HEK293 (cell line): ENCODE measurements at regions of chr5 and their contacts with region 1.

Region 1: DNA sequence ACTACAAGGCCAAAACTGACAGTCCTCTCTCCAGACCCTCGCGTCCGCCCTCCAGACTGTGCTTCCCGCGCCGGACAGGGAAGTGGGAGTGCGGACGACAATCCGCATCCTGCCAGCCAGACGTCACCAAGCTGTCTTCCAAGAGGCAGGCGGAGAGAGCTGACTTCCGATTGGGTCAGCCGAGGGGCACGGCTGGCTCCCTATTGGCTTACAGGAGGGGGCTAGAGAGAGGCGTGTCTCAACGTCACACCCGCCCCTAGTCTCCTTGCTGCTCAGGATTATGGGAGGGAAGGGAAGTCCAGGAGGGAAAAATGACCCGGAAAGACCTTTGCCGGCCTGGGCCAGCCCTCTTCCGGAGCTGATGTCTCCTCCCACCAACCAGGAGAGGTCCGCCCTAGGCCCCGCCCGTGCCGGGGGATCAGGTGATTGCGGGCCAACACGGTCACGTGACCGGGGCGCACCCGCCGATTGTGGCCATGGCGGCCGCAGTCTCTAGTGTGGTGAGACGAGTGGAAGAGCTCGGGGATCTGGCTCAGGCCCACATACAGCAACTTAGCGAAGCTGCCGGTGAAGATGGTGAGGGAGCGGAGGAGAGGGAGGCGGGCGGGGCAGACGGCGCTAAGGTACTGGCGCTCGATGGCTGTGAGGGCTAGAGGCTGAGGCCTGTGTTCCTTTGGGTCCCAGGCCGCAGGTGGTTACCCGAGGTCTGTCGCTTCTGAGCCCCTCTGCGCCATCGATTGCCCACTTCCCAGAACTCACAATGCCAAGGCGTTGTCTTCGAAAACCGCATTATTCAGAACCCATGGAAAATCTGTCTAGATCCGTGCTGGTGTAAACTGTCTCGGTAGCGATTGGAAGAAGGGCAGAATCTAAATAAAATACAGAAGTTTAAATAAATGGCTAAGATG is at the start of gene RIMOC1:
- H3K4me3 ChIP-seq: peak within 1 kb of the TSS; percentile 97
- H3K27ac ChIP-seq: peak within 1 kb of the TSS; percentile 58; the same call in 1 of the 2 replicates
- H3K4me1 ChIP-seq: peaks cover 4% of the 10 kb centered on the region
- CTCF ChIP-seq: no peak

Region 2: GRCh38 chr5:41863871-41864486 is 40.2 kb before region 1 on chr5:
- CTCF ChIA-PET with region 1: no interaction called
- POLR2A ChIA-PET with region 1: interaction called, 30 read pairs
- H3K4me3 ChIP-seq: no peak overlapping the region
- H3K27ac ChIP-seq: no peak overlapping the region
- H3K4me1 ChIP-seq: peaks cover 9% of the 10 kb centered on the region; the same call in 1 of the 2 replicates
- CTCF ChIP-seq: no peak

Region 3: DNA sequence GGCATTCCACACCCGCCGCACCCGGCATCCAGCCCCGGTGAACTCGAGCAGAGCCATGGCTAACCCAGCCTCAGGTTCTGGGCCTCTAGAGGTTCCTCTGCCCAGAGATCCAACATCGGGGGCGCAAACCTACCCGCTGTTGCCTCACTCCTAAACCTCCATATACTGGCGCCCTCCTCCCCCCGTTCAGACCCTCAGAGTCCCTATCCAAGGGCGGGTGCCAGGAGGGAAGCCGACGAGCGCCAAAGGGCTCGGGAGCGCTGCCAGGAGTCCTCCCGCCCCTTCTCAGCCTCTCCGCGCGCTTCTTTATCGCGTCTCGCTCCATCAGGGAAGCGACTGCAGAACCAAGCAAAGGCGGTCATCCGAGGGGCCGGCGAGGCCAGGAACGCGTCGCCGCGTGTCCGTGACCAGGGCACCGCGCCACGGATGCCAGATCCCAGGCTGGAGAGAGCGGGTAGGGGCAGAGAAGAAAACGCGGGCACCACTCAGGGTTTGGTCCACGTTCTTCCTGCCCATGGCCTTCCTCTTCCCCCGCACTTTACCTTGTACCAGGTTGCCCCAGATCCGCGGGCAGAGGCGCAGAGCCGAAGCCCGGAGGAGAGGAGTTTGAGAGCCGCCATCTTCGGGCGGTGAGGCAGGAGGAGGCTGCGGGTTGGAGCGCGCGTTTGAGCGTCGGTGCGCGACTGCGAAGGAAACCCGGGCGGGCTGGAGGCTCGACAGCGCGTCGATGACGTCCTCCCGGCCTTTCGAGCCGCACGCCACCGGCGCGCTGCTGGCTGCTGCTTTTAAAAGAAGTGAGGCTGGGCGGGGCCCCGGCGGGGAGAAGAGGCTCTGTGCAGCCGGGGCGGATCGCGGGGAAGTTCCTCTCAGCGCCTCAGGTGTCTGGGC is 34.2 kb before region 1 on chr5 and contains the start of gene OXCT1:
- CTCF ChIA-PET with region 1: no interaction called
- POLR2A ChIA-PET with region 1: interaction called, 30 read pairs
- H3K4me3 ChIP-seq: peak within 1 kb of the TSS; percentile 84
- H3K27ac ChIP-seq: peak within 1 kb of the TSS; percentile 87
- H3K4me1 ChIP-seq: peaks cover 4% of the 10 kb centered on the region
- CTCF ChIP-seq: no peak; the same call in 1 of the 2 replicates

Region 4: GRCh38 chr5:41924872-41925554 is 20.9 kb after region 1 on chr5 and contains the start of gene FBXO4:
- CTCF ChIA-PET with region 1: interaction called, 6 read pairs
- POLR2A ChIA-PET with region 1: interaction called, 14 read pairs
- H3K4me3 ChIP-seq: peak within 1 kb of the TSS; percentile 68
- H3K27ac ChIP-seq: peak within 1 kb of the TSS; percentile 53; the same call in 1 of the 2 replicates
- H3K4me1 ChIP-seq: peaks cover 3% of the 10 kb centered on the region; the same call in 1 of the 2 replicates
- CTCF ChIP-seq: peak; percentile 99